Ascending aorta (tissue), 2 donors: ENCODE measurements at regions of chr7 and their contacts with region 1.

Region 1: DNA sequence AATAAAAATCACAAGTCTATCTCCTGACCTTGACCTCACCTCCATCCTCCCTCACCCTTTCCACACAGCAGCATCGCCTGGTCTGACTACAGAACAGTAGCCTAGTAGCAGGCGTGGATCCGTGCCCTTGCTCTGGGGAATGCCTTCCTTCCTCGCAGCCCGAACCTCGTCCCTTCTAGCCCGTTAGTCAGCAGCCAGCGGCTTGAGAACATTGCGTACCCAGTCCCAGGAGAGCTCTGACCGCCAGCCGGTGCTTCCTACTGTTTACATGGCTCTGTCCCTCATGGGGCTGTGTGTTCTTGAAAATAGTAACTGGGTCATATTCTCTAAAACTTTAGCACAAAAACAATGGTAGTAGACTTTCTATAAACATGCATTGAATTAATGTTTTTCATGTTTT is 682.7 kb upstream of the IGFBP3 start:
- DNase-seq: peak; percentile 83 to 97
- H3K4me3 ChIP-seq: peak overlapping the region in 1 of 2 donors; percentile 33
- H3K27ac ChIP-seq: peak overlapping the region; percentile 78 to 79
- H3K4me1 ChIP-seq: peaks cover 8 to 10% of the 10 kb centered on the region in 2 donors
- H3K27me3 ChIP-seq: no peaks in the 10 kb centered on the region
- CTCF ChIP-seq: no peak

Region 2: GRCh38 chr7:45978010-45978681 is 625.6 kb before region 1 on chr7:
- intact Hi-C with region 1: loop called (anchors 5 kb)
- DNase-seq: peak in 1 of 2 donors; percentile 88
- H3K4me3 ChIP-seq: peak overlapping the region in 1 of 2 donors; percentile 13
- H3K27ac ChIP-seq: peak overlapping the region; percentile 78 to 87
- H3K4me1 ChIP-seq: peaks cover 13 to 31% of the 10 kb centered on the region in 2 donors
- H3K27me3 ChIP-seq: no peaks in the 10 kb centered on the region
- CTCF ChIP-seq: no peak

Region 3: DNA sequence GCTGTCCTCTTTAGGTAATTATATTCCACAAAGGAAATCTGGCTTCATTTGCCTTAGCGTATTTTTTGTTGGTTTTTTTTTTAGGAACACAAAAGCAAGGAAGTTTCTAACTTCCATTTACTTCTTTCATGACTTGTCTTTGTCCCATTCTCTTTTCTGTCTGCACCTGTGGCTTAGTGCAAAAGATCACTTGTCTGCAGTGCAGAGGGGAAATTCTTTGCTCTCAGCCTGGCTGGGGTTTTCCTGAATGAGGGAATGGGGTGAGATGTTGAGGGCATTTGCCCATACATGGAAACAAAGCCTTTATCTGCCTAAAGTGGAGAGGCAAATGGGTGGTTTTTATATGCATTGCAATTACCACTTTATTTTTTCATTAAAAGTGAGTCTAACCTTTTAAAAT is 321.6 kb before region 1 on chr7:
- intact Hi-C with region 1: loop called (anchors 10 kb)
- DNase-seq: no peak
- H3K4me3 ChIP-seq: no peak overlapping the region
- H3K27ac ChIP-seq: no peak overlapping the region
- H3K4me1 ChIP-seq: no peaks in the 10 kb centered on the region
- H3K27me3 ChIP-seq: no peaks in the 10 kb centered on the region
- CTCF ChIP-seq: no peak

Region 4: DNA sequence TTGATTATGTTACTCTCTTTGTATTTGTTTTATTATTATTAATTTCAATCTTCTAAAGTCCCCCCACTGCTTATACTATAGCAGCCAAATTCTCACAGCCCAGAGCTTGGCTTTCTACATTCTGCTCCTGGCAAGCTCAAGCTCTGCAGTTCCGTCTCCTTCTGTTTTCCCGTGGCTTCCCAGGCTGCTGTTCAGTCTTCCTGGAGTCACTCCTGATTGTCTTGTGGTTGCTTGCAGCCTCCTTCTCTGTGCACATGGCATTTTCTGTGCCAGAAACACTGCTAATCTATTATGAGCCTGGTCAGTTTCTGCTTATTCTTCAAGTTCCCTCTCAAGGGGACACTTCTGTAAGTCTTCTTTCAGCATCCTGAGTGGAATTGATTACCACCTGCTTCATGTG is 149.0 kb before region 1 on chr7:
- intact Hi-C with region 1: loop called (anchors 10 kb)
- DNase-seq: no peak
- H3K4me3 ChIP-seq: no peak overlapping the region
- H3K27ac ChIP-seq: no peak overlapping the region
- H3K4me1 ChIP-seq: peaks cover 0 to 3% of the 10 kb centered on the region in 2 donors
- H3K27me3 ChIP-seq: no peaks in the 10 kb centered on the region
- CTCF ChIP-seq: no peak

Region 5: GRCh38 chr7:47254081-47255006 is 650.6 kb after region 1 on chr7:
- intact Hi-C with region 1: loop called (anchors 5 kb)
- DNase-seq: peak; percentile 29 to 87
- H3K4me3 ChIP-seq: peak overlapping the region; percentile 51 to 77
- H3K27ac ChIP-seq: peak overlapping the region; percentile 74 to 89
- H3K4me1 ChIP-seq: peaks cover 5 to 11% of the 10 kb centered on the region in 2 donors
- H3K27me3 ChIP-seq: no peaks in the 10 kb centered on the region
- CTCF ChIP-seq: peak; percentile 55 to 96 (median 68)